ENCODE measurements at regions of chr2 and their contacts with region 1.

Region 1: DNA sequence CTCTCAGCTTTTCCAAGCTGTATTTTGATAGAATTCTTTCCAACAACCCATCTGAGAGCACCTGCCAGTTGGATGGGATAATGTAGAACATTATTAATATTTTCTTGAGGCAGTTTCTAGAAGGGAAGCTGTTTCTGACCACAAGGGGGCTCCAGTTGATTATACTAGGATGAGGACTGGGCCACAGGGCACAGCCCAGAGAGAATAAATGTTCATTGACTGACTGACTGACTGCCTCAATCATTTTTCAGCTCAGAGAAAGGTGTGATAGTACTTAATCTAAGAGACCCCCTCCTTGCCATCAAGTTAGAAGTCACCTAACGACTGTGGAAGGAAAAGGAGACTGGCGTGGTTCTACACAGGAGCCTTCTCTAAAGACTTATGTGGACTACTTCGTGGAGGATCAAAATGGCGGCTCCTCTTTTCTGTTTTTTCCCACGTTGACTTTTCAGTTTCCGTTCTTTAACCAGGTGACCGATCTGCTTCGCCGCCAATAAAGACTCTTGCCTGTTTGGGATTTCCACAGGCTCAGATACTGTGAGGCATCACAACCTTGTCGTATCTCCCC is 31.9 kb upstream of the CREG2 start:
- DNase-seq: peak; percentile 45
- H3K4me3 ChIP-seq: no peak overlapping the region
- H3K27ac ChIP-seq: no peak overlapping the region
- H3K4me1 ChIP-seq: no peaks in the 10 kb centered on the region
- H3K27me3 ChIP-seq: no peaks in the 10 kb centered on the region
- CTCF ChIP-seq: peak; percentile 77 to 79

Region 2: DNA sequence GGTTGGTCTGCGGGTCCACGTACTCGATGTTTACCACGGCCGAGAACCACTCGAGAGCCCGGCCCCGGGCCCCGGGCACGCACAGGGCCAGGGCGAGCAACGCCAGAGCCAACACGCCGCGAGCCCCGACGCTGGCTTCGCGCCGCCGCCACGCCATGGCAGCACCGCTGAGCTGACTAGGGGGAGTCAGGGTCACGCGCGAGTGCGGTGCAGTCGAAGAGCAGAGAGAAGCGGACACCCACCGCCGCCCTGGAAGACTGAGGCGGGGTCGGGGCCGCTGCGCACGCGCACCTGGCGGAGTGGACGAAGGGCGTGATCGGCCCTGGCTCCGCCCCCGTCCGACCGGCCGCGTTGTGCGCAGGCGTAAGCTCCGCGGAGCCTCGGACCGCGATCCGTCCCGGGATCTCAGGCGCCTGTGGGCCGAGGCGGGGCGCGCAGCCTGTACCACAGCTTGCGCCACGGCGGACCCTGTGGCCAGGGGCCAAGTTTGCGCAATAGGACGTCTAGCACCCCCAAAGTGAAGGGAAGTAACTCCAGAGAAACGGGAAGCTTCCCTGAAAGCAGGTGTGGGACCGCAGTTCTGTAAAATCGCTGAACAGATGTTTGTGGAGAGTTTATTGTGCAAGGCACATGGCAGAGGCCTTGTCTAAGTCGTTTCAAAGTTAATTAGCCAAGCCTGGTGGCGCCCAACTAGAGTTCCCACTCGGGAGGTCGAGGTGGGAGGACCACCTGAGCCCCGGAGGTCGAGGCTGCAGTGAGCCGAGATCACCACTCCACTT is 110.6 kb before region 1 on chr2 and contains the start of gene RNF149:
- CTCF ChIA-PET with region 1: no interaction called
- dilution Hi-C with region 1: no loop called
- in situ Hi-C with region 1: no loop called
- intact Hi-C with region 1: no loop called
- DNase-seq: peak; percentile 85
- H3K4me3 ChIP-seq: peak within 1 kb of the TSS; percentile 46 to 71 (median 66)
- H3K27ac ChIP-seq: peak within 1 kb of the TSS; percentile 83
- H3K4me1 ChIP-seq: peaks cover 29% of the 10 kb centered on the region
- H3K27me3 ChIP-seq: no peaks in the 10 kb centered on the region
- CTCF ChIP-seq: no peak
- total RNA-seq, gene RNF149: 53.0 to 55.8 TPM

Region 3: GRCh38 chr2:101328474-101329007 is 90.6 kb before region 1 on chr2:
- CTCF ChIA-PET with region 1: no interaction called
- dilution Hi-C with region 1: loop called (anchors 5 kb)
- in situ Hi-C with region 1: no loop called
- intact Hi-C with region 1: no loop called
- DNase-seq: peak; percentile 86
- H3K4me3 ChIP-seq: peak overlapping the region in 2 of 3 experiments; percentile 10 to 21
- H3K27ac ChIP-seq: peak overlapping the region; percentile 80
- H3K4me1 ChIP-seq: peaks cover 40% of the 10 kb centered on the region
- H3K27me3 ChIP-seq: no peaks in the 10 kb centered on the region
- CTCF ChIP-seq: no peak

Region 4: DNA sequence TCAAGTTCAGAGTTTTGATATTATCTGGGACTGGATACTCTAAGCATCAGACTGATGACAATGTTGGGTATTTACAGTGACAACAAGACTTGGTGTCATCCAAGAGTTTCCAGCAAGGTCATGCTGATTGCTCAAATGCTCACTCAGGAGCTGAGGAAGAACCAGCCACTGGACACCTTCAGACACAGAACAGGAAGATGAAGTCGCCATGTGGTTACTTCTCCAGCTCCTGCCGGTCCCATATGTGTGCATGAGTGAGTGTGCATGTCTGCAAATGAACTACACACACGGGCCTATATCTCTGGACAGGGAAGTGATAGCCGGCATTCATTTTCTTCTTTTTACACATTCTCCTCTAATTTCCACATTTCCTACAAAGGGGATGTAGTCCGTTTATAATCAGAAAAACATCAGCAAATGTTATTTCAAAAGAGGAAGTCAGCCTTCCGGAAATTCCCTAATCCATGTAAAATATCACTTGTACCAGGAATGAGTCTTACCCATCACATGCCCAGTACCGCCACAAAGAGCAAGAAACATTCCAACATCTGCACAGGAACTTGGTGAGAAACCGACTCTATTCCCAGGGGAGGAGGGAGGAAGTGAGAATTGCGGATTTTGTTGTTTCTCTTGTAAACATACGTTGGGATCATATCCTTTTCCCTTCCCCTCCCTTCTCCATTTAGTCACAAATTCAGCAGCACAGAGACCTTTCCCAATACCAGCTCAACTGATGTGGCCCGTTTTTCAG is 44.9 kb after region 1 on chr2:
- CTCF ChIA-PET with region 1: no interaction called
- dilution Hi-C with region 1: no loop called
- in situ Hi-C with region 1: no loop called
- intact Hi-C with region 1: no loop called
- DNase-seq: no peak
- H3K4me3 ChIP-seq: no peak overlapping the region
- H3K27ac ChIP-seq: no peak overlapping the region
- H3K4me1 ChIP-seq: no peaks in the 10 kb centered on the region
- H3K27me3 ChIP-seq: no peaks in the 10 kb centered on the region
- CTCF ChIP-seq: no peak

Region 5: DNA sequence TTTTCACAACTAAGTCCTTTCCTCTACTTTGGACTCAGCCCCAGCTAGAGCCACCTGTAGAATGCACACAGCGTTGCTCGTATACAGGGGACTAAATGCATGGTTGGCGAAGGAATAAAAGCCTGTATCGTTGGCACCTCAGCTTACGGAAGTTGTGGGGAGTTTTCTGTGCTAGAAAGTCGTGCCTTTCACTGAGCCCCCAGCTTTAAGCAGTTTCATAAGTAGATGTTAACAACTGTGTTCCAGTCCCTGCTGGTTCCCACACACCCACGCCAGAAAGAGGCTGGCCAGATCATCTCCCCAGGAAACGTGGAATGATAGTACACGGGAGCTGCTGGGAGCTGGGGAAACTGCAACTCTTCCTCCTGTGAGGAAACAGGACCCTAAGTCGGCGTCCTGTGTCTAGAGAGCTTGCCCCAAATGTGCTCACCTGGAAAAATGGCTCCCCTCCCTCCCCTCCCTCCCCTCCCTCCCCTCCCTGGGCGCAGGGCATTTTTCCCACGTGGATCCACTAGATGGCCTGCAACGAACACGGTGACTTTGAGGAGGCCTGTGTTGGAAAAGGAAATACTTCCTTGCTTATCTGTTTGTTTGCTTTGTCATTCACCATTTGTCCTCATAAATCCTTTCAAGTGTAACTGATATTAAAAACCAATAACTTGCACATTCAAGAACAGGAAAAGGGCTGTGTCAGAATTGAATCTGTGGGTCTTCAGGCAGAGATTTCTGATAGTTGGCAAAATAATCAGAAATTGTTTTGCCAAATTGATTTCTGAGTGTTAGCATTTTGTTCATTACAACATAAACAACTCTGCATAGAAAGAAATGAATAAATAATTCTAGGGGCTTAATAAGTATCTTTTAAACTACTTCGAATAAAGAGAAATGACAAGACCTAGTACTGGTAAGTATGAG is 99.7 kb after region 1 on chr2:
- CTCF ChIA-PET with region 1: no interaction called
- dilution Hi-C with region 1: no loop called
- in situ Hi-C with region 1: no loop called
- intact Hi-C with region 1: loop called (anchors 1 kb)
- DNase-seq: peak; percentile 65
- H3K4me3 ChIP-seq: peak overlapping the region in 1 of 3 experiments; percentile 5
- H3K27ac ChIP-seq: peak overlapping the region; percentile 95
- H3K4me1 ChIP-seq: peaks cover 68% of the 10 kb centered on the region
- H3K27me3 ChIP-seq: no peaks in the 10 kb centered on the region
- CTCF ChIP-seq: peak; percentile 33 to 75

Region 6: DNA sequence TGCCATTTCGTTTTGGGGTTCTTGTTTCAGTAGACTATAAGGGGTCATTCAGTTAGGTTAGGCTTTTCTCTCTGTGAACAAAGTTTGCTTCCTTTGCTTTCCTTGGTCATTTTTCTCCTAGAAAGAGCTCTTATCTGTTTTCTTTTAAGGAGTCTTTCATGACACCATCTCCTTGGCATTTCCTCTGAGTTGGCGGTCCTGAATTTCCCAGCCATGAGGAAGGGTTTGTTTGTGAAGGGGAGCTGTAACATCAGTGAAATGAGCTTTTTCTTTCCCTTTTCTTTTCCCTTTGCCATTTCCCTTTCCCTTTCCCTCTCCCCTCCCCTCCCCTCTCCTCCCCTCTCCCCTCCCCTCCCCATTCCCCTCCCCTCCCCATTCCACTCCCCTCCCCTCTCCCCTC is 340.0 kb after region 1 on chr2:
- CTCF ChIA-PET with region 1: interaction called, 3 read pairs
- dilution Hi-C with region 1: no loop called
- in situ Hi-C with region 1: no loop called
- intact Hi-C with region 1: loop called (anchors 5 kb)
- DNase-seq: peak; percentile 87
- H3K4me3 ChIP-seq: no peak overlapping the region
- H3K27ac ChIP-seq: peak overlapping the region; percentile 17
- H3K4me1 ChIP-seq: peaks cover 35% of the 10 kb centered on the region
- H3K27me3 ChIP-seq: no peaks in the 10 kb centered on the region
- CTCF ChIP-seq: no peak

Region 7: GRCh38 chr2:101873543-101873942 is 454.4 kb after region 1 on chr2:
- CTCF ChIA-PET with region 1: no interaction called
- dilution Hi-C with region 1: loop called (anchors 10 kb)
- in situ Hi-C with region 1: no loop called
- intact Hi-C with region 1: no loop called
- DNase-seq: no peak
- H3K4me3 ChIP-seq: no peak overlapping the region
- H3K27ac ChIP-seq: no peak overlapping the region
- H3K4me1 ChIP-seq: no peaks in the 10 kb centered on the region
- H3K27me3 ChIP-seq: no peaks in the 10 kb centered on the region
- CTCF ChIP-seq: peak in 1 of 2 donors; percentile 27

Region 8: DNA sequence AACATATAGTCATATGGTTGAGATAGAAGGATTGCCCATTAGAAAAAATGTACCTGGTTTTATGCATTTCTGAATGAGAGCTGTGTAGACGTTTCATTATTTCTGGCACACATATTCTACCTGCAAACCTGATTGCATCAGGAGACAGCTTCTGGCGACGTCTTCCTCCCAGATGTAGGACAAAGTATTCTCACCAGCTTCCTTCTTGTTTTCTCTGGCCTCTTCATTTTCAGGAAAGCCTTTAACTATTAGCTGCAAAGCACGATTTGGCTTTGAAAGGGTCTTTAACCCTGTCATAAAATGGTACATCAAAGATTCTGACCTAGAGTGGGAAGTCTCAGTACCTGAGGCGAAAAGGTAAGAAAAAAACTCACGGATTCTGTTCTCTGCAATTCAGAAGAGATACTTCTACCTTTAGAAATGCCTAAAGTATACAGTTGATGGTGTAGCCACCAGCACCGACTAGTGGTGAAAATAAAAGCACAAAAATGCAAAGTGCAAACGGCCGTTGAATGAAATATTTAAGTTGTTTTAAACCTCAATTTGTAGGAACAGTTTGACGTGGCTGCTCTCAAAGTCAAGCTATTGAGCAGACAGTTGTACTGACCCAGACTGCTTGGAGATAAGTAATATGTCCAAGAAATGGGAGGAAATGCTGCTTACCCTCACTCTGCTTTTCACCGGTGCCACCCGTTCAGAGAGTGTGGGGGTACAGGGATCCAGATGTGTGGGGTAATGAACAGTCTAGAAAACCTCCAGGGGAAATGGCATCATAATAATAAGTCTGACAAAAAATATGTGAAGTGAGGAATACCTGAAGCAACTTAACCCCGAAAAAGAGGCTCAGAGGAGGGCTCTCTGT is 1024.0 kb after region 1 on chr2:
- CTCF ChIA-PET with region 1: no interaction called
- dilution Hi-C with region 1: no loop called
- in situ Hi-C with region 1: no loop called
- intact Hi-C with region 1: loop called (anchors 10 kb)
- DNase-seq: peak; percentile 35
- H3K4me3 ChIP-seq: no peak overlapping the region
- H3K27ac ChIP-seq: no peak overlapping the region
- H3K4me1 ChIP-seq: peaks cover 11% of the 10 kb centered on the region
- H3K27me3 ChIP-seq: no peaks in the 10 kb centered on the region
- CTCF ChIP-seq: peak; percentile 72 to 78

Measured in mammary epithelial cell (primary cell).